Endothelial cell of umbilical vein (primary cell): ENCODE measurements at regions of chr1 and their contacts with region 1.

Region 1: GRCh38 chr1:159214149-159214760 is 9.6 kb downstream of the ACKR1 start:
- DNase-seq: peak; percentile 49
- H3K4me3 ChIP-seq: no peak overlapping the region
- H3K27ac ChIP-seq: no peak overlapping the region
- H3K4me1 ChIP-seq: peaks cover 12% of the 10 kb centered on the region
- H3K27me3 ChIP-seq: no peaks in the 10 kb centered on the region
- CTCF ChIP-seq: peak; percentile 84 to 85
- POLR2A ChIP-seq: no peak

Region 2: DNA sequence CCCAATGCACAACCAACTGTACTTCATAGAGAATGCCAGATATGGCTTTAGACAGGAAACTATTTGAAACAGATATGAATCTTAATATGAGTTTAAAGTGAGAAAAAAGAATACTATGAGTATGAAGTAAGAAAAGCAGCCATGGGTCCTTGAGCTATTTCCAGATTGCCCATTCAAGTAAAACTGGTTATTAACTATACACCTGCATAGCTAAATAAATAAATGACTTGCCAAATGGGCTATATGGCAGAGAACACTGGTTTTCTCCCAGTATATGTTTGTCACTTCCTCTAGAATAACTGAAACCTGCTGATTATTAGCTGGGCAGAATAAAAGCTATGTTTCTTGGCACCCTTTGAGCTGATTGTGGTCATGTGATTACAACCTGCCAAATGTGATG is 941.6 kb before region 1 on chr1:
- CTCF ChIA-PET with region 1: no interaction called
- POLR2A ChIA-PET with region 1: no interaction called
- dilution Hi-C with region 1: no loop called
- intact Hi-C with region 1: no loop called
- DNase-seq: no peak
- H3K4me3 ChIP-seq: no peak overlapping the region
- H3K27ac ChIP-seq: no peak overlapping the region
- H3K4me1 ChIP-seq: no peaks in the 10 kb centered on the region
- H3K27me3 ChIP-seq: no peaks in the 10 kb centered on the region
- CTCF ChIP-seq: no peak
- POLR2A ChIP-seq: no peak

Region 3: GRCh38 chr1:159113596-159114433 is 100.4 kb before region 1 on chr1:
- CTCF ChIA-PET with region 1: no interaction called
- POLR2A ChIA-PET with region 1: no interaction called
- dilution Hi-C with region 1: no loop called
- intact Hi-C with region 1: no loop called
- DNase-seq: no peak
- H3K4me3 ChIP-seq: no peak overlapping the region
- H3K27ac ChIP-seq: no peak overlapping the region
- H3K4me1 ChIP-seq: no peaks in the 10 kb centered on the region
- H3K27me3 ChIP-seq: peaks cover 0 to 3% of the 10 kb centered on the region in 2 experiments
- CTCF ChIP-seq: no peak
- POLR2A ChIP-seq: no peak

Region 4: DNA sequence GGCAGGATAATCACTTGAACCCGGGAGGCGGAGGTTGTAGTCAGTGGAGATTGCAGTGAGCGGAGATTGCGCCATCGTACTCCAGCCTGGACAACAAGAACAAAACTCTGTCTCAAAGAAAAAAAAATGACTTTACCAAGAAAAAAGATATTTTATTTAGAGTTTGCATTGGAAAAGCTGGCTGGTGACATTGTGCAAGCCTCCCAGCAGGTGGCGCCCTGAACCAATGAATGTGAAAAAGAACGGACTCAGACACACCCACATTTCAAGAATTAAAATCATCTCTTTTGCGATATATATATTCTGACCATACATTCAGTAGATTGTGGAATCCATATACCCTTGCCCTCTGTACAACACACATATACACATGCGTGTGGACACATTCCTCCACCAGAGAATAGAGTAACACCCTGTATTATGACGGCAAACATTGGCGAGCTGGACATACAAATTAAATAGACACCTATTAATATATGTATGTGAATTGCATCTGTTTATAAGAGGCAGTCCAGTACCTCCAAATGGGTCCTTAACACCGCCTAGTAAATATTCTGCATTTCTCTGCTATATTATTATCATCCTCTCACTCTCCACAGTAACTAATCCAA is 81.9 kb before region 1 on chr1:
- CTCF ChIA-PET with region 1: interaction called, 58 read pairs
- POLR2A ChIA-PET with region 1: no interaction called
- dilution Hi-C with region 1: no loop called
- intact Hi-C with region 1: loop called (anchors 1 kb)
- DNase-seq: peak; percentile 68
- H3K4me3 ChIP-seq: no peak overlapping the region
- H3K27ac ChIP-seq: no peak overlapping the region
- H3K4me1 ChIP-seq: no peaks in the 10 kb centered on the region
- H3K27me3 ChIP-seq: peaks cover 15 to 16% of the 10 kb centered on the region in 2 experiments
- CTCF ChIP-seq: peak; percentile 76 to 89
- POLR2A ChIP-seq: no peak

Region 5: GRCh38 chr1:159197561-159198557 is 16.4 kb before region 1 on chr1:
- CTCF ChIA-PET with region 1: interaction called, 49 read pairs
- POLR2A ChIA-PET with region 1: no interaction called
- dilution Hi-C with region 1: no loop called
- intact Hi-C with region 1: loop called (anchors 1 kb)
- DNase-seq: peak; percentile 81
- H3K4me3 ChIP-seq: no peak overlapping the region
- H3K27ac ChIP-seq: no peak overlapping the region
- H3K4me1 ChIP-seq: no peaks in the 10 kb centered on the region
- H3K27me3 ChIP-seq: no peaks in the 10 kb centered on the region
- CTCF ChIP-seq: peak; percentile 85 to 87
- POLR2A ChIP-seq: no peak

Region 6: GRCh38 chr1:159408862-159409400 is 194.7 kb after region 1 on chr1:
- CTCF ChIA-PET with region 1: interaction called, 12 read pairs
- POLR2A ChIA-PET with region 1: no interaction called
- dilution Hi-C with region 1: no loop called
- intact Hi-C with region 1: no loop called
- DNase-seq: peak; percentile 98
- H3K4me3 ChIP-seq: peak overlapping the region in 1 of 3 experiments; percentile 39
- H3K27ac ChIP-seq: peak overlapping the region; percentile 90
- H3K4me1 ChIP-seq: peaks cover 10% of the 10 kb centered on the region
- H3K27me3 ChIP-seq: no peaks in the 10 kb centered on the region
- CTCF ChIP-seq: no peak
- POLR2A ChIP-seq: no peak

Region 7: GRCh38 chr1:159598196-159598595 is 383.9 kb after region 1 on chr1:
- CTCF ChIA-PET with region 1: interaction called, 3 read pairs
- POLR2A ChIA-PET with region 1: no interaction called
- dilution Hi-C with region 1: no loop called
- intact Hi-C with region 1: loop called (anchors 5 kb)
- DNase-seq: peak; percentile 72
- H3K4me3 ChIP-seq: no peak overlapping the region
- H3K27ac ChIP-seq: peak overlapping the region; percentile 99
- H3K4me1 ChIP-seq: peaks cover 40% of the 10 kb centered on the region
- H3K27me3 ChIP-seq: no peaks in the 10 kb centered on the region
- CTCF ChIP-seq: no peak
- POLR2A ChIP-seq: peak; percentile 45

Region 8: DNA sequence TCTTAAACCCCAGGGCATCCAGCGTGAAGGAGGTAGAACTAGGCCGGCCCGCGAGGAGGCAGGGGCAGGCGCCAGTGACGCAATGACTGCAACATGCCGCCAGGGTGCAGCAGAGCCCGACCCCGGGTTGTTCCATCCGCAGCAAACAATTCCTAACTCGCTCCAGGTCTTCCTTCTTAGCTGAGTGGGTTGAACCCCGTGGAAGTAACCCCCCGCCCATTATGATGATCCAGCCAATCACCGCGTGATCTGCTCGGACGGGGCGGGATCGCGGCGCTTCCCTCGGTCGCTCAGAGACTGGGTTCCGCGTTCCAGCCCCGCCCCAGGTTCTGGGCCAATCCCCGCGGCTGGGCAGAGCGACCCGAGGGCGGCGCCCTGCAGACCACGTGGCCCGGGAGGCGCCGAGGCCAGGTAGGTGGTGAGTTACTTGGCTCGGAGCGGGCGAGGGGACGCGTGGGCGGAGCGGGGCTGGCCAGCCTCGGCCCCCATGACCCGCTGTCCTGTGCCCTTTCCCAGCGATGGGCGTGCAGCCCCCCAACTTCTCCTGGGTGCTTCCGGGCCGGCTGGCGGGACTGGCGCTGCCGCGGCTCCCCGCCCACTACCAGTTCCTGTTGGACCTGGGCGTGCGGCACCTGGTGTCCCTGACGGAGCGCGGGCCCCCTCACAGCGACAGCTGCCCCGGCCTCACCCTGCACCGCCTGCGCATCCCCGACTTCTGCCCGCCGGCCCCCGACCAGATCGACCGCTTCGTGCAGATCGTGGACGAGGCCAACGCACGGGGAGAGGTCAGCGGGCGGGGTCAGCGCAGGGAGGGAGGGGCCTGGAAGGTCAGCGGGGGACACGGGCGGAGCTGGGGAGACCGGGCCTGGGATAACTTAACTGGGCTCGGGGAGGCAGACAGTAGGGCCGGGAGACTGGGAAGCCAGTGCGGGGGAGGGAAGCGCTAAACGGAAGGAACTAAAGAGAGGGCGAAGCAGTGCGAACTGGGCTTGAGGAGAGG is 566.6 kb after region 1 on chr1 and contains the start of gene DUSP23:
- CTCF ChIA-PET with region 1: interaction called, 61 read pairs
- POLR2A ChIA-PET with region 1: no interaction called
- dilution Hi-C with region 1: no loop called
- intact Hi-C with region 1: loop called (anchors 2 kb)
- DNase-seq: peak; percentile 100
- H3K4me3 ChIP-seq: peak within 1 kb of the TSS; percentile 35 to 80 (median 62)
- H3K27ac ChIP-seq: peak within 1 kb of the TSS; percentile 92
- H3K4me1 ChIP-seq: peaks cover 46% of the 10 kb centered on the region
- H3K27me3 ChIP-seq: no peaks in the 10 kb centered on the region
- CTCF ChIP-seq: peak; percentile 90 to 97
- POLR2A ChIP-seq: peak; percentile 10
- total RNA-seq, gene DUSP23: 82.5 and 126 TPM in 2 replicates

Region 9: DNA sequence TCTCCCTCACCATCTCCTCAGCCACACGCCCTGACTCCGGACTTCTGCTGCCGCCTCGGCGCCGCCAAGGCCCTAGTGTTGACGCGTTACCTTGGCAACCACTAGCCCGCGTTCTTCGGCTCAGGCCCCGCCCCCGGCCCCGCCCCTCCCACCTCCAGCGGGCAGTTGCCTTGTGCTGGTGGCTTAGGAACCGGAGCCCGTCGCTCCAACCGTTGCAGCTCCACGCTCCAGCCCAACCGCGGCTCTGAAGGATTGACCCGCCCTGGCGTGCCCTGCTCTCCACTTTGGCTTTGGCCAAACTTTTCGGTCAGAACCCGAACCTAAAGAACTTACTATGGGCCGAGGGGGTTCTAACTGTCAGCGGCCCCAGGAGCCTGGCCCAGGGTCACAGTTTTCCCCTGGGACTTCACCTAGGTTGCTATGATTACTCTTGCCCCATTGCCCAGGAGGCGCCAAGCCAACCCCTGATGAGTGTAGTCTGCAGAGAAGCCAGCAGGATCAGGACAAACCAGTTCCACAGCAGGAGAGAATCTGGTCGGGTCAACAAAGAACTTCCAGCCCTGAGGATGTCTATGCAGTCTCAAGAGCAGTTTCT is 685.9 kb after region 1 on chr1 and contains the start of gene CFAP45:
- CTCF ChIA-PET with region 1: no interaction called
- POLR2A ChIA-PET with region 1: no interaction called
- dilution Hi-C with region 1: no loop called
- intact Hi-C with region 1: no loop called
- DNase-seq: peak; percentile 76
- H3K4me3 ChIP-seq: no peak within 1 kb of the TSS
- H3K27ac ChIP-seq: peak within 1 kb of the TSS; percentile 35
- H3K4me1 ChIP-seq: no peaks in the 10 kb centered on the region
- H3K27me3 ChIP-seq: no peaks in the 10 kb centered on the region
- CTCF ChIP-seq: no peak
- POLR2A ChIP-seq: no peak
- total RNA-seq, gene CFAP45: 2.1 and 2.5 TPM in 2 replicates